Activated CD4-positive, alpha-beta T cell treated with anti-CD3 and anti-CD28 coated beads for 36 hours (primary cell): ENCODE measurements at regions of chr6 and their contacts with region 1.

Region 1: GRCh38 chr6:90393232-90393884 is 96.7 kb upstream of the BACH2 start:
- DNase-seq: peak; percentile 87
- ATAC-seq: peak; percentile 41
- H3K4me3 Mint-ChIP-seq: no peak overlapping the region
- H3K27ac Mint-ChIP-seq: peak overlapping the region; percentile 65
- H3K4me1 Mint-ChIP-seq: peaks cover 76% of the 10 kb centered on the region
- H3K27me3 Mint-ChIP-seq: no peaks in the 10 kb centered on the region

Region 2: DNA sequence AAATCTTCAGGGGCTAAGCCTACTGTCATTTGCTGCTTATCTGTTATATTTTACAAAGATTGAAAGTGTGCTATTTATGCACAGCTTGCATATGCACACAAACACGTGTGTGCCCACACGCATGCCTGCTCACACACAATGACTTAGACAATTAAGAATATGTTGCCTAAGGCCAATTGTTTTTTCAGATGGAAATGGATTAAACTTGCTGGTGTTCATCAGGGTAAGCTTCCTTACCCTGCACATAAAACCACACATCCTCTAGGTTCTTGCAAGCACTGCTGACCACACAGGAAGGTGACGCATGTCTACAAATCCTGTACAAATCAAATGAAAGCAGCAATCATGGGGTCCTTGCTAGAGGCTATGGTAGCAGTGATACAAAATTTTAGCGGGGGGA is 440.7 kb before region 1 on chr6:
- CTCF ChIA-PET with region 1: no interaction called
- POLR2A ChIA-PET with region 1: no interaction called
- intact Hi-C with region 1: loop called in 1 of 2 experiments (anchors 5 kb)
- DNase-seq: peak; percentile 66
- ATAC-seq: peak; percentile 60
- H3K4me3 Mint-ChIP-seq: no peak overlapping the region
- H3K27ac Mint-ChIP-seq: peak overlapping the region; percentile 79
- H3K4me1 Mint-ChIP-seq: peaks cover 75% of the 10 kb centered on the region
- H3K27me3 Mint-ChIP-seq: no peaks in the 10 kb centered on the region

Region 3: DNA sequence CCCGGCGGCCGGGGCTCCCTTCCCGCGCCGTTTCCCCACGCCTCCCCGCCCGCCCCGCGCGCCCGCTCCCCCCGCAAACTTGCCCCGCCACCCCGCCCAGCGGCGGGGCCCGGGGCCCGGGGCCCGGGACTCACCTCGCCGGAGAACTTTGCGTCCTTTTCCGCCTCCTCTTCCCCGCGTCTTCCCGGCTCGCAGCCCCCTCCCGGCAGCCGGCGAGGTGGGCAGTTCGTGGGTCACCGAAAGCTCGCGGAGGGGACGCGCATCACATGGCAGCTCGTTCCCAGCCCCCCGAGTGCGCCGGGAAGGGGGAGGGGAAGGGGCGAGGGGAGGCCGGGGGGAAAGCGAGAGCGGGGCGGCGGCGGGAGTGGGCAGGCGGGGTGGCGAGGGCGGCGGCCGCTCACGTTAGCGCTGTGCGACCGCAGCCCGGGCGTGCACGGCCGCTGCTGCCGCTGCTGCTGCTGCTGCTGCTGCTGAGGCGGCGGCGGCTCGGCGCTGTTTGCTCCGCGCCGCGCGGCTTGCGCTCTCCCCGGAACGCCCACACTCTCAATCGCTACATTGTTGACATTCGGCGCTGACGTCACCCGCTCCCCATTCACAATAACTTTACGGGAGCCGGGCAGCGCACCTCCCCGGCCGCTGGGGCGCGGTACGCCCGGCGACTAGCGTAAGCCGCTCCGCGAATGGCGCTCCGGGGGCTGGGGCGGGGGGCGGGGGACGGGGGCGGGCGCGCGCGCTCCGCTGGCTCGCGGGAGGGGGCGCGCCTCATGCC is 96.8 kb before region 1 on chr6 and contains the start of gene BACH2:
- CTCF ChIA-PET with region 1: interaction called, 19 read pairs
- POLR2A ChIA-PET with region 1: interaction called, 6 read pairs
- intact Hi-C with region 1: loop called (anchors 1 to 2 kb)
- DNase-seq: peak; percentile 99
- ATAC-seq: peak; percentile 66
- H3K4me3 Mint-ChIP-seq: peak within 1 kb of the TSS; percentile 86
- H3K27ac Mint-ChIP-seq: peak within 1 kb of the TSS; percentile 100
- H3K4me1 Mint-ChIP-seq: peaks cover 49% of the 10 kb centered on the region
- H3K27me3 Mint-ChIP-seq: peaks cover 7% of the 10 kb centered on the region
- total RNA-seq, gene BACH2: 74.7 to 87.3 TPM

Region 4: GRCh38 chr6:90369024-90369519 is 24.3 kb before region 1 on chr6:
- CTCF ChIA-PET with region 1: interaction called, 10 read pairs
- POLR2A ChIA-PET with region 1: no interaction called
- intact Hi-C with region 1: loop called in 1 of 2 experiments (anchors 1 kb)
- DNase-seq: peak; percentile 33
- ATAC-seq: peak; percentile 75
- H3K4me3 Mint-ChIP-seq: no peak overlapping the region
- H3K27ac Mint-ChIP-seq: peak overlapping the region; percentile 24
- H3K4me1 Mint-ChIP-seq: peaks cover 22% of the 10 kb centered on the region
- H3K27me3 Mint-ChIP-seq: no peaks in the 10 kb centered on the region

Region 5: DNA sequence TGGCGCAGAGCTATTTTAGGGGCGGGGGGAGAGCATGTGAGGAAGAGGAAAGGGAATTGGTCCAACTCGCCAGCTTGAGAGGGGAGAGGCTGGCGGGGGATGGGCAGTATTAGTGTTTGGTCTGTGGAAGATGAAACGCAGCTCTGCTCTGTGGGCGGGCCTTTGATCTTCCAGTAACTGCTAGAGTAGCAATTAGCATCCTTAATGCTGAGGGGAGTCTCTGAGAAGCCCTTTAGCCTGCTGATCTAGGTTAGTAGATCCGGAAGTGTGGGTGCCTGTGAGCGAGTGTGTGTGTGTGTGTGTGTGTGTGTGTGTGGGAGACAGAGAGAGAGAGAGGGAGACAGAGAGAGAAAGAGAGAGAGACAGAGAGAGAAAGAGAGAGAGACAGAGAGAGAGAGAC is 20.5 kb after region 1 on chr6:
- CTCF ChIA-PET with region 1: interaction called, 11 read pairs
- POLR2A ChIA-PET with region 1: interaction called, 16 read pairs
- intact Hi-C with region 1: loop called (anchors 1 kb)
- DNase-seq: peak; percentile 91
- ATAC-seq: peak; percentile 51
- H3K4me3 Mint-ChIP-seq: peak overlapping the region; percentile 67
- H3K27ac Mint-ChIP-seq: peak overlapping the region; percentile 93
- H3K4me1 Mint-ChIP-seq: peaks cover 72% of the 10 kb centered on the region
- H3K27me3 Mint-ChIP-seq: no peaks in the 10 kb centered on the region

Region 6: GRCh38 chr6:90466154-90466940 is 73.0 kb after region 1 on chr6:
- CTCF ChIA-PET with region 1: interaction called, 11 read pairs
- POLR2A ChIA-PET with region 1: interaction called, 4 read pairs
- intact Hi-C with region 1: loop called in 1 of 2 experiments (anchors 2 kb)
- DNase-seq: peak; percentile 68
- ATAC-seq: peak; percentile 74
- H3K4me3 Mint-ChIP-seq: peak overlapping the region; percentile 48
- H3K27ac Mint-ChIP-seq: peak overlapping the region; percentile 93
- H3K4me1 Mint-ChIP-seq: peaks cover 97% of the 10 kb centered on the region
- H3K27me3 Mint-ChIP-seq: peaks cover 2% of the 10 kb centered on the region

Region 7: GRCh38 chr6:90715093-90715655 is 321.8 kb after region 1 on chr6:
- CTCF ChIA-PET with region 1: no interaction called
- POLR2A ChIA-PET with region 1: no interaction called
- intact Hi-C with region 1: no loop called
- DNase-seq: no peak
- ATAC-seq: no peak
- H3K4me3 Mint-ChIP-seq: no peak overlapping the region
- H3K27ac Mint-ChIP-seq: no peak overlapping the region
- H3K4me1 Mint-ChIP-seq: peaks cover 7% of the 10 kb centered on the region
- H3K27me3 Mint-ChIP-seq: peaks cover 25% of the 10 kb centered on the region